ENCODE measurements at regions of chr20 and their contacts with region 1.

Region 1: GRCh38 chr20:44310664-44311639 is at the start of gene FITM2:
- DNase-seq: peak; percentile 96 to 98 (median 98)
- H3K4me3 ChIP-seq: peak within 1 kb of the TSS; percentile 78 to 92
- H3K4me3 Mint-ChIP-seq: peak within 1 kb of the TSS; percentile 91 to 97 (median 95)
- H3K27ac ChIP-seq: peak within 1 kb of the TSS; percentile 64
- H3K27ac Mint-ChIP-seq: peak within 1 kb of the TSS; percentile 92 to 99 (median 95)
- H3K4me1 ChIP-seq: peaks cover 23% of the 10 kb centered on the region
- H3K4me1 Mint-ChIP-seq: peaks cover 18 to 29% (median 21%) of the 10 kb centered on the region in 4 donors
- H3K27me3 ChIP-seq: no peaks in the 10 kb centered on the region
- H3K27me3 Mint-ChIP-seq: peaks cover 0 to 2% of the 10 kb centered on the region in 2 donors
- total RNA-seq, gene FITM2: 5.8 to 6.3 TPM

Region 2: GRCh38 chr20:43761386-43762340 is 549.3 kb before region 1 on chr20:
- CTCF ChIA-PET with region 1: no interaction called
- POLR2A ChIA-PET with region 1: no interaction called
- intact Hi-C with region 1: no loop called
- DNase-seq: no peak
- H3K4me3 ChIP-seq: no peak overlapping the region
- H3K4me3 Mint-ChIP-seq: no peak overlapping the region
- H3K27ac ChIP-seq: no peak overlapping the region
- H3K27ac Mint-ChIP-seq: peak overlapping the region in 1 of 7 donors; percentile 32
- H3K4me1 ChIP-seq: no peaks in the 10 kb centered on the region
- H3K4me1 Mint-ChIP-seq: peaks cover 0 to 8% (median 0%) of the 10 kb centered on the region in 4 donors
- H3K27me3 ChIP-seq: no peaks in the 10 kb centered on the region
- H3K27me3 Mint-ChIP-seq: peaks cover 0 to 1% of the 10 kb centered on the region in 2 donors

Region 3: GRCh38 chr20:44115762-44116644 is 194.9 kb before region 1 on chr20:
- CTCF ChIA-PET with region 1: interaction called, 5 read pairs
- POLR2A ChIA-PET with region 1: no interaction called
- intact Hi-C with region 1: loop called (anchors 1 kb)
- DNase-seq: no peak
- H3K4me3 ChIP-seq: no peak overlapping the region
- H3K4me3 Mint-ChIP-seq: no peak overlapping the region
- H3K27ac ChIP-seq: no peak overlapping the region
- H3K27ac Mint-ChIP-seq: no peak overlapping the region
- H3K4me1 ChIP-seq: peaks cover 4% of the 10 kb centered on the region
- H3K4me1 Mint-ChIP-seq: peaks cover 2 to 5% (median 4%) of the 10 kb centered on the region in 4 donors
- H3K27me3 ChIP-seq: peaks cover 7% of the 10 kb centered on the region
- H3K27me3 Mint-ChIP-seq: peaks cover 26 to 37% of the 10 kb centered on the region in 2 donors

Region 4: GRCh38 chr20:44222633-44223368 is 88.2 kb before region 1 on chr20:
- CTCF ChIA-PET with region 1: interaction called, 669 read pairs
- POLR2A ChIA-PET with region 1: interaction called, 173 read pairs
- intact Hi-C with region 1: no loop called
- DNase-seq: no peak
- H3K4me3 ChIP-seq: no peak overlapping the region
- H3K4me3 Mint-ChIP-seq: no peak overlapping the region
- H3K27ac ChIP-seq: no peak overlapping the region
- H3K27ac Mint-ChIP-seq: peak overlapping the region; percentile 31 to 88 (median 64)
- H3K4me1 ChIP-seq: peaks cover 28% of the 10 kb centered on the region
- H3K4me1 Mint-ChIP-seq: peaks cover 25 to 36% (median 32%) of the 10 kb centered on the region in 4 donors
- H3K27me3 ChIP-seq: no peaks in the 10 kb centered on the region
- H3K27me3 Mint-ChIP-seq: no peaks in the 10 kb centered on the region

Region 5: DNA sequence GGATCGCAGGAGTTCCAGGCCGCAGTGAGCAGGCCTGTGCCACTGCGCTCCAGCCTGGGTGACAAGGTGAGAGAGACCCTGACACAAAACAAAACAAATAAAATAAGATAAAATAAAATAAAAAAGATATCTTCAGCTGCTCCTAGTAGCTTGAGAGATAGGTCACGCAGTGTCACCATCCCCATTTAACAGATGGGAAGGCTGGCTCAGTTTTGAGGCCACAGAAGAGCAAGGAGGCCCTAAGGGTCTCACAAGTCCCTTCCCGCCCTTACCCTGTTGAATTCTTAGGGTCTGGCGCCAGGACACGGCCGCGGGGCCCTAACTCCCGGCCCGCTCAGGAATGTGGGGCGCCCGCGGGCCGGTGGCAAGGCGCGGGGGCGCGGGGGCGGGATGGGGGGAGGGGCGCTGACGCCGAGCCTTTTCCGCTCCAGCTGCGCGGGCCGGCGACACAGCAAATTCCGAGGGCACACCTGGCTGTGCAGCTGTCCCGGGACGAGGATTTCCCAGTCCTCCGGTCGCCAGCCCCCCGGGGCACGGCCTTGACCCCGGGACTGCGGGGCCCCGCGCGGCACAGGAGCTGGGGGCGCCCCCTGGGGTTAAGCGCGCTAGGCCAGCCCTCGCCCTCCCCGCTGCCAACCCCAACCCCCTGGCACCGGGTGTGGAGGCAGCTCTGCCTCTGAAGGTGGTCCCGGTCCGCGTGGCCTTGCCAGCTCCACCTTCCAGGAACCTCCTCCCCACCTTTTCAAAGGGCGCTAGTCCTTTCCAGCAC is 15.6 kb after region 1 on chr20:
- CTCF ChIA-PET with region 1: interaction called, 33 read pairs
- POLR2A ChIA-PET with region 1: no interaction called
- intact Hi-C with region 1: no loop called
- DNase-seq: no peak
- H3K4me3 ChIP-seq: no peak overlapping the region
- H3K4me3 Mint-ChIP-seq: peak overlapping the region in 6 of 8 donors; percentile 31 to 75 (median 42)
- H3K27ac ChIP-seq: no peak overlapping the region
- H3K27ac Mint-ChIP-seq: no peak overlapping the region
- H3K4me1 ChIP-seq: no peaks in the 10 kb centered on the region
- H3K4me1 Mint-ChIP-seq: no peaks in the 10 kb centered on the region
- H3K27me3 ChIP-seq: no peaks in the 10 kb centered on the region
- H3K27me3 Mint-ChIP-seq: peaks cover 8 to 9% of the 10 kb centered on the region in 2 donors

Region 6: GRCh38 chr20:44343162-44343675 is 32.3 kb after region 1 on chr20:
- CTCF ChIA-PET with region 1: no interaction called
- POLR2A ChIA-PET with region 1: no interaction called
- intact Hi-C with region 1: no loop called
- DNase-seq: no peak
- H3K4me3 ChIP-seq: no peak overlapping the region
- H3K4me3 Mint-ChIP-seq: no peak overlapping the region
- H3K27ac ChIP-seq: no peak overlapping the region
- H3K27ac Mint-ChIP-seq: no peak overlapping the region
- H3K4me1 ChIP-seq: no peaks in the 10 kb centered on the region
- H3K4me1 Mint-ChIP-seq: peaks cover 0 to 1% (median 0%) of the 10 kb centered on the region in 4 donors
- H3K27me3 ChIP-seq: no peaks in the 10 kb centered on the region
- H3K27me3 Mint-ChIP-seq: peaks cover 3 to 10% of the 10 kb centered on the region in 2 donors

Region 7: GRCh38 chr20:44521484-44522481 is 210.8 kb after region 1 on chr20 and contains the start of gene SERINC3:
- CTCF ChIA-PET with region 1: interaction called, 3 read pairs
- POLR2A ChIA-PET with region 1: interaction called, 3 read pairs
- intact Hi-C with region 1: loop called (anchors 10 kb)
- DNase-seq: peak; percentile 97 to 98 (median 98)
- H3K4me3 ChIP-seq: peak within 1 kb of the TSS; percentile 62 to 78
- H3K4me3 Mint-ChIP-seq: peak within 1 kb of the TSS; percentile 81 to 94 (median 90)
- H3K27ac ChIP-seq: peak within 1 kb of the TSS; percentile 99
- H3K27ac Mint-ChIP-seq: peak within 1 kb of the TSS; percentile 82 to 99 (median 95)
- H3K4me1 ChIP-seq: peaks cover 54% of the 10 kb centered on the region
- H3K4me1 Mint-ChIP-seq: peaks cover 29 to 68% (median 54%) of the 10 kb centered on the region in 4 donors
- H3K27me3 ChIP-seq: no peaks in the 10 kb centered on the region
- H3K27me3 Mint-ChIP-seq: no peaks in the 10 kb centered on the region
- total RNA-seq, gene SERINC3: 84.8 to 90.1 TPM